Activated CD8-positive, alpha-beta memory T cell treated with anti-CD3 and anti-CD28 coated beads, Interleukin-2, amount 10 ng/mL, durations not matched to agents 7 days and 5 days (primary cell): ENCODE measurements at regions of chr12 and their contacts with region 1.

Region 1: GRCh38 chr12:94101738-94102660 is 46.4 kb upstream of the PLXNC1 start:
- DNase-seq: peak; percentile 91
- ATAC-seq: peak; percentile 84
- H3K4me3 Mint-ChIP-seq: peak overlapping the region; percentile 80
- H3K27ac Mint-ChIP-seq: peak overlapping the region; percentile 75
- H3K4me1 Mint-ChIP-seq: peaks cover 29% of the 10 kb centered on the region
- H3K27me3 Mint-ChIP-seq: peaks cover 46% of the 10 kb centered on the region

Region 2: GRCh38 chr12:92987362-92987761 is 1114.6 kb before region 1 on chr12:
- CTCF ChIA-PET with region 1: interaction called, 17 read pairs
- DNase-seq: no peak
- ATAC-seq: peak; percentile 51
- H3K4me3 Mint-ChIP-seq: no peak overlapping the region
- H3K27ac Mint-ChIP-seq: peak overlapping the region; percentile 72
- H3K4me1 Mint-ChIP-seq: peaks cover 26% of the 10 kb centered on the region
- H3K27me3 Mint-ChIP-seq: peaks cover 8% of the 10 kb centered on the region

Region 3: GRCh38 chr12:93514853-93515252 is 587.1 kb before region 1 on chr12:
- CTCF ChIA-PET with region 1: interaction called, 167 read pairs
- DNase-seq: no peak
- ATAC-seq: no peak
- H3K4me3 Mint-ChIP-seq: no peak overlapping the region
- H3K27ac Mint-ChIP-seq: no peak overlapping the region
- H3K4me1 Mint-ChIP-seq: no peaks in the 10 kb centered on the region
- H3K27me3 Mint-ChIP-seq: peaks cover 6% of the 10 kb centered on the region

Region 4: GRCh38 chr12:93742110-93742934 is 359.7 kb before region 1 on chr12:
- CTCF ChIA-PET with region 1: interaction called, 25 read pairs
- DNase-seq: peak; percentile 74
- ATAC-seq: peak; percentile 98
- H3K4me3 Mint-ChIP-seq: peak overlapping the region; percentile 83
- H3K27ac Mint-ChIP-seq: peak overlapping the region; percentile 90
- H3K4me1 Mint-ChIP-seq: peaks cover 25% of the 10 kb centered on the region
- H3K27me3 Mint-ChIP-seq: no peaks in the 10 kb centered on the region

Region 5: GRCh38 chr12:93785262-93786010 is 316.6 kb before region 1 on chr12:
- CTCF ChIA-PET with region 1: interaction called, 10 read pairs
- DNase-seq: peak; percentile 75
- ATAC-seq: peak; percentile 98
- H3K4me3 Mint-ChIP-seq: no peak overlapping the region
- H3K27ac Mint-ChIP-seq: peak overlapping the region; percentile 59
- H3K4me1 Mint-ChIP-seq: peaks cover 32% of the 10 kb centered on the region
- H3K27me3 Mint-ChIP-seq: no peaks in the 10 kb centered on the region

Region 6: DNA sequence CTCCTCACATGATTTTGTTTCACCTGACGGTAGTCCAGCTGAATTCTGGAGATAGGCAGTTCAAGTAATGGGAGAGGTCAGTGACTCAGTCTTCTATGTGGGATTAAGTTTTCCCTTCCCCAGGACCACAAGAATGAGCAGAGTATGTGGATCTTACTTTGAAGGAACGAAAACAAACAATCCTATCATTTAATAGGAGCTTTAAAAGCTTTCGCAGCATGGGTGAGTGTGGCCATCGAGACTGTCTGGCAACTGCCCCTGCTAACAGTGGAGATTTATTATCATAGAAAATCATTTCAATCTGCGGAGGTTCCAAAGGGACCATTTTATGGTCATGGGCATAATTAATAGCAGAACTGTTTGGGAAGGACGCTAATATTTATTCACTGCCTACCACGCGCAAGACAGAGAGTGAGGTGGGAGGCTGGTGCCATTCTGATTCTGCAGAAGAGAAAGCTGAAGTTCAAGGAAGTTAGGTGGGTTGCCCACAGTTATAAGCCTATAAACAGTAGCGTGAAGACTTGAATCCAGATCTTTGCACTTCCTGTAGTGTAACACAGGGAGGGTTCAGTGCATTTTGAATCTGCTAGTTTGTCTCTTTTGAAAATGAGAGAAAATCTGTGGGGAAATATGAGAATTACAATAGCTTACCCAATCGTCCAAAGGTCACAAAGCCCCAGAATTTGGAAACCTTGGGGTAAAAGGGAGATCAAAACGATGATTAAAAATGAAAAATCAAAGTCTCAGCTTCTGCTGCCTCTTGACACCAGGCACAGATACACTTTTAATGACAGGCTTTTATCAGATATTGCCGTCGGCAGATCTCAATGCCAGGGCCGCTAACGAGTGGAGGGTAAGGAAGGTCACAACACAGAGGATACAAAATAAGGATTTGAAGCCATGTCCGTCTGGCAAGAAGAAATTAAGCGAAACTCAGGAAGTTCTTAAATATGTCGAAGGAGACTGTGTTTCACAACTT is 215.2 kb before region 1 on chr12:
- CTCF ChIA-PET with region 1: no interaction called
- DNase-seq: no peak
- ATAC-seq: no peak
- H3K4me3 Mint-ChIP-seq: no peak overlapping the region
- H3K27ac Mint-ChIP-seq: no peak overlapping the region
- H3K4me1 Mint-ChIP-seq: no peaks in the 10 kb centered on the region
- H3K27me3 Mint-ChIP-seq: no peaks in the 10 kb centered on the region

Region 7: DNA sequence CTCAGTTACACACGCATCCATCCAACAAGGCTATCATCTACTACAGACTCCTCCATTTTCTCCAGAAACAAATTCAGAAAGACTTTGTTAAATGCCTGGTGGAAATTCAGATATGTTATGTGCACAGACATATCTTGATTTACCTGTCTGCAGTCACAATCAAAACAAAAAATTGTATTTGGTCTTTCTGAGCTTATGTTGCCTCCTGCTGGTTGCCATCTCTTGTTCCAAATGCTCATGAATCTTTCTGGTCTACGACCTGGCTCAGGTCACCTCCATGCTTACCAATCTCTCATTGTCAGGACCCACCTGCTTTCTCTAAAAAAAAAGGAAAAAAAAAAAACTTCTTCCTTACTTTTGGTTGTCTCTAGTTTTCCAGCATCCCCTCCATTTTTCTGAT is 122.8 kb before region 1 on chr12:
- CTCF ChIA-PET with region 1: interaction called, 39 read pairs
- DNase-seq: no peak
- ATAC-seq: peak; percentile 36
- H3K4me3 Mint-ChIP-seq: no peak overlapping the region
- H3K27ac Mint-ChIP-seq: no peak overlapping the region
- H3K4me1 Mint-ChIP-seq: peaks cover 22% of the 10 kb centered on the region
- H3K27me3 Mint-ChIP-seq: peaks cover 22% of the 10 kb centered on the region

Region 8: DNA sequence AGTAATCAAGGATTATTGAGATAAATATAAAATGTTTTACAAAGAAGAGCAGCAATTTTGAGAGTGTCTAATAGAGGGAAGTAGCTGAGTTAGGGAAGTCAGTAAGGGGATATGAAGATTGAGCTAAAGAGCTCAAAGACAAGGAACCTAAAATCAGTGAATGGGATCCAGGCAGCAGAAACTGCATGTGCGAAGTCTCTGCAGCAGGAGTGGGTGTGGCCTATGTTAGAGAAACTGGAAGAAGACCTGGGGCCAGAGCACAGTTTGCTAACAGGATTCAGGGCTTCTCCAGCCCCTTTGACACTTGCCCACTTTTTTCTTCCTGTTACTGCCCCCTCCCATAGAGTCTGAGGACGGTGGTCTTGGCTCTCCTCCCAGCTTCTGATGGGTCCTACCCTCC is 10.1 kb after region 1 on chr12:
- CTCF ChIA-PET with region 1: interaction called, 34 read pairs
- DNase-seq: no peak
- ATAC-seq: no peak
- H3K4me3 Mint-ChIP-seq: no peak overlapping the region
- H3K27ac Mint-ChIP-seq: no peak overlapping the region
- H3K4me1 Mint-ChIP-seq: peaks cover 11% of the 10 kb centered on the region
- H3K27me3 Mint-ChIP-seq: peaks cover 14% of the 10 kb centered on the region

Region 9: DNA sequence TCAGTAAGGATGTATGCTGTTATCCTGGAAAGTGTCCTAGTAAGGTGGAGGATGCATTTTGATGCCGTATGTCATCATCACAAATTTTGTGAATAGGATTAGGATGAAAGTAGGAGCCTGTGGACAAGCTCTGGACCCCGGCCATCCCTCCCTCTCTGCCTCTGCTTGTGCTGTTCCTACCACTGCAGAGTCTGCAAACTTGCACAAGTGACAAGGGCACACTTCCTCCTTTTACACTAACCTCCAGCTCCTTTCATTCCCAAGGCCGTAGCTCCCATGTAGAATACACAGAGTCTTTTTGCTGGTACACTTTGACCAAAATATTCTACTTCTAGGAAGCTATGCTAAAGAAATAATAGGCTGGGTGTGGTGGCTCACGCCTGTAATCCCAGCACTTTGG is 561.7 kb after region 1 on chr12:
- CTCF ChIA-PET with region 1: no interaction called
- DNase-seq: no peak
- ATAC-seq: no peak
- H3K4me3 Mint-ChIP-seq: no peak overlapping the region
- H3K27ac Mint-ChIP-seq: no peak overlapping the region
- H3K4me1 Mint-ChIP-seq: no peaks in the 10 kb centered on the region
- H3K27me3 Mint-ChIP-seq: peaks cover 17% of the 10 kb centered on the region